Motor neuron (in vitro differentiated cells): ENCODE measurements at regions of chr1 and their contacts with region 1.

Region 1: DNA sequence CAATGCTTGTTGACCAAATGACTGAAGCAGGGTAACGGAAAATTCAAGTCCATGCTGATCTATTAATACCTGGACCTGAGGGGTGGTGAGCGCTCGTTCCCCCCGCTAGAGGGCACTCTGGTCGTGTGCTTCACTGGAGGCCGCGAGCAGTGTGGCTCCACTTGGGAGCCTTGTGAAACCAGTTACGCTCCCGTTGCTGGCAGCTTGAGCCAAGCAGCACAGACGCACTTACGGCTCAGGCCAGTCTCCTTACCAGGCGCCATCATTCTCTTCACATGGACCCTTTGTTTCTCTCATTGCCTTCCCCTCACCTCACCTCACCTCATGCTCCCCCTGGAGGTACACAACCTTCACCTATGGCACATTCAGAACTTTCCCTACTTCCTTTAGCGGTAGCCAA is 49.7 kb upstream of the TSPAN2 start:
- ATAC-seq: peak; percentile 98 to 100 (median 100)
- H3K4me3 ChIP-seq: no peak overlapping the region
- H3K27ac ChIP-seq: no peak overlapping the region
- H3K4me1 ChIP-seq: no peaks in the 10 kb centered on the region

Region 2: DNA sequence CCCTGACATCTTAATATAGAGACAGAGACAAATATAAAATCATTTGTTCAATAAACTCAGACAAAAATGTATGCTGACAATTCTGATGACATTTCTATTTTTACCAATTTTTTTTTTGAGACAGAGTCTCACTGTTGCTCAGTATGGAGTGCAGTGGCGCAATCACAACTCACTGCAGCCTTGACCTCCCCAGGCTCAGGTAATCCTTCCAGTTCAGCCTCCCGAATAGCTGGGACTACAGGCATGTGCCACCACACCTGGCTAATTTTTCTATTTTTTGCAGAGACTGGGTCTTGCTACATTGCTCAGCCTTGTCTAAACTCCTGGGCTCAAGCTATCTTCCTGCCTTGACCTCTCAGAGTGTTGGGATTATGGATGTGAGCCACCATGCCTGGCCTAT is 344.9 kb before region 1 on chr1:
- in situ Hi-C with region 1: no loop called
- ATAC-seq: no peak
- H3K4me3 ChIP-seq: no peak overlapping the region
- H3K27ac ChIP-seq: no peak overlapping the region
- H3K4me1 ChIP-seq: no peaks in the 10 kb centered on the region

Region 3: GRCh38 chr1:115337633-115338456 is 198.9 kb after region 1 on chr1 and contains the start of gene NGF:
- in situ Hi-C with region 1: loop called in 1 of 9 experiments (anchors 25 kb)
- ATAC-seq: peak; percentile 83 to 95 (median 88)
- H3K4me3 ChIP-seq: peak within 1 kb of the TSS; percentile 17 to 42 (median 38)
- H3K27ac ChIP-seq: no peak within 1 kb of the TSS
- H3K4me1 ChIP-seq: peaks cover 0 to 12% of the 10 kb centered on the region in 2 donors
- total RNA-seq, gene NGF: 0.57 to 20.0 (median 0.78) TPM in 4 of 8 experiments, not detected in the others

Region 4: GRCh38 chr1:115469703-115470476 is 330.9 kb after region 1 on chr1:
- in situ Hi-C with region 1: loop called in 4 of 9 experiments (anchors 5 to 25 kb)
- ATAC-seq: peak in 6 of 8 experiments; percentile 25 to 68 (median 43)
- H3K4me3 ChIP-seq: no peak overlapping the region
- H3K27ac ChIP-seq: no peak overlapping the region
- H3K4me1 ChIP-seq: no peaks in the 10 kb centered on the region

Region 5: DNA sequence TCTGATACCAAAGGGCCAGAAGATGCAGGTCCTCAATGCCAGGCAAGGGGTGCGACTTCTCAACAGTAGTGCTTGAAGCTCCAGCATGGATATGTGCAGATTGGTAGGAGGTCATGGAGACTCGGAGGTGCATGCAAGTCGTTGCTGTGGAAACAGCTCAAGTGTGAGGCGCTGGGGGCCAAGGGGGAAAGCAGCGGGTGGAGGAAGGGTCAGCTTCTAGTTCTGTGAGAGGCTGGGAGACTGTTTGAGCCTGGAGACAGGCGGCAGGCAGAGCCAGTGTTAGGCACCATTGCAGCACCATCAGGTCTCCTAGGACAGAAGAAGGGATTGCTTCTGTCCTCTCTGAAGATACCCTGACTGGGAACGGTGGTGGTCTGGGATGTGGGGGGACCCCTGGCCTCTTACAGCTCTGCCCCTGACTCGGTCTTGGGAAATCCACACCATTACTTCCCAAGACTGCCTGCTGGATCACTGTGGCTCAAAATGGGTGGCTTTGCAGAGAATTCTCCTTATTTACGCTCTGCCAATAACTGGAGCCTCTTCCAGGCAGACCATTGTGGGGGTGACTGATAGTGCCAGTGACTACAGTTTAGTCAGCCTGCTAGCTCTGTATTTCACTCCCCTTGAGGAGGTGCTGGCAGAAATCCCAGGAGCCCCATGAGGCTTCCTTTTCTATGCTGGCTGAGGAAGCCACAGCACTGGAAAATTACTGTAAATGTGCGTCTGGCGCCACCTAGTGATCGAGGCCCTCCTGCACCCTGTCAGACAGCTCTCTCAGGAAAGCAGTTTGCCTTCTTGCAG is 456.5 kb after region 1 on chr1:
- in situ Hi-C with region 1: loop called in 8 of 9 experiments (anchors 10 to 25 kb)
- ATAC-seq: peak; percentile 97 to 99 (median 99)
- H3K4me3 ChIP-seq: no peak overlapping the region
- H3K27ac ChIP-seq: no peak overlapping the region
- H3K4me1 ChIP-seq: peaks cover 6 to 7% of the 10 kb centered on the region in 2 donors

Region 6: DNA sequence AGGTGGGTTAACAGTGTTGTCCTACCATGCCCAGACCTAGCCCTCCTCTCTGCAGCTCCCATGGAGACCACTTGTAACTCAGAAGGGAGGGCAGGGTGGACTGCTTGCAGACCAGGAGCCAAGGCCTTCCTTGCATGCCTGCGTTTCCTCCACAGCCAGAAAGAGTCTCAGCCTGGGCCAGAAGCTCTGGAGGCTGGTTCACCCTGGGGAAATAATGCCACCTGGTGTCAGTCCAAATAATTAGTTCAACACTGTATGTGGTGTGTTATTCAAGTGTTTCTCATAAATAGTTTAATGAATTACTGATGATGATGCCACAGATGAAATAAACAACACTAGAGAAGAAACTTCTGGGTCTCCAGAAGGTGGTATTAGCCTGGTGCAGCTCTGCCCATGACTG is 485.9 kb after region 1 on chr1:
- in situ Hi-C with region 1: loop called in 1 of 9 experiments (anchors 25 kb)
- ATAC-seq: no peak
- H3K4me3 ChIP-seq: no peak overlapping the region
- H3K27ac ChIP-seq: no peak overlapping the region
- H3K4me1 ChIP-seq: no peaks in the 10 kb centered on the region

Region 7: GRCh38 chr1:115771847-115772457 is 633.0 kb after region 1 on chr1:
- in situ Hi-C with region 1: loop called in 1 of 9 experiments (anchors 25 kb)
- ATAC-seq: peak; percentile 97 to 99 (median 98)
- H3K4me3 ChIP-seq: no peak overlapping the region
- H3K27ac ChIP-seq: no peak overlapping the region
- H3K4me1 ChIP-seq: peaks cover 3 to 4% of the 10 kb centered on the region in 2 donors